ENCODE measurements at regions of chr22 and their contacts with region 1.

Region 1: GRCh38 chr22:29766632-29767170 is at the start of gene ZMAT5:
- DNase-seq: peak; percentile 97
- H3K4me3 Mint-ChIP-seq: peak within 1 kb of the TSS; percentile 96
- H3K27ac Mint-ChIP-seq: peak within 1 kb of the TSS; percentile 91
- H3K4me1 Mint-ChIP-seq: peaks cover 33% of the 10 kb centered on the region
- H3K27me3 Mint-ChIP-seq: no peaks in the 10 kb centered on the region
- total RNA-seq, gene ZMAT5: 14.3 to 15.3 TPM

Region 2: GRCh38 chr22:29727131-29727523 is 39.6 kb before region 1 on chr22:
- CTCF ChIA-PET with region 1: no interaction called
- intact Hi-C with region 1: no loop called
- DNase-seq: peak; percentile 39
- H3K4me3 Mint-ChIP-seq: no peak overlapping the region
- H3K27ac Mint-ChIP-seq: no peak overlapping the region
- H3K4me1 Mint-ChIP-seq: no peaks in the 10 kb centered on the region
- H3K27me3 Mint-ChIP-seq: no peaks in the 10 kb centered on the region

Region 3: GRCh38 chr22:29737251-29738117 is 29.2 kb before region 1 on chr22:
- CTCF ChIA-PET with region 1: no interaction called
- intact Hi-C with region 1: no loop called
- DNase-seq: no peak
- H3K4me3 Mint-ChIP-seq: no peak overlapping the region
- H3K27ac Mint-ChIP-seq: no peak overlapping the region
- H3K4me1 Mint-ChIP-seq: no peaks in the 10 kb centered on the region
- H3K27me3 Mint-ChIP-seq: no peaks in the 10 kb centered on the region

Region 4: GRCh38 chr22:29820961-29821789 is 54.5 kb after region 1 on chr22:
- CTCF ChIA-PET with region 1: no interaction called
- intact Hi-C with region 1: loop called (anchors 1 kb)
- DNase-seq: peak; percentile 86
- H3K4me3 Mint-ChIP-seq: no peak overlapping the region
- H3K27ac Mint-ChIP-seq: peak overlapping the region; percentile 83
- H3K4me1 Mint-ChIP-seq: peaks cover 15% of the 10 kb centered on the region
- H3K27me3 Mint-ChIP-seq: no peaks in the 10 kb centered on the region

Region 5: GRCh38 chr22:29837780-29838598 is 71.3 kb after region 1 on chr22 and contains the start of gene ASCC2:
- CTCF ChIA-PET with region 1: no interaction called
- intact Hi-C with region 1: loop called (anchors 1 kb)
- DNase-seq: peak; percentile 100
- H3K4me3 Mint-ChIP-seq: peak within 1 kb of the TSS; percentile 94
- H3K27ac Mint-ChIP-seq: peak within 1 kb of the TSS; percentile 92
- H3K4me1 Mint-ChIP-seq: peaks cover 34% of the 10 kb centered on the region
- H3K27me3 Mint-ChIP-seq: no peaks in the 10 kb centered on the region
- total RNA-seq, gene ASCC2: 57.6 to 60.4 TPM

Region 6: DNA sequence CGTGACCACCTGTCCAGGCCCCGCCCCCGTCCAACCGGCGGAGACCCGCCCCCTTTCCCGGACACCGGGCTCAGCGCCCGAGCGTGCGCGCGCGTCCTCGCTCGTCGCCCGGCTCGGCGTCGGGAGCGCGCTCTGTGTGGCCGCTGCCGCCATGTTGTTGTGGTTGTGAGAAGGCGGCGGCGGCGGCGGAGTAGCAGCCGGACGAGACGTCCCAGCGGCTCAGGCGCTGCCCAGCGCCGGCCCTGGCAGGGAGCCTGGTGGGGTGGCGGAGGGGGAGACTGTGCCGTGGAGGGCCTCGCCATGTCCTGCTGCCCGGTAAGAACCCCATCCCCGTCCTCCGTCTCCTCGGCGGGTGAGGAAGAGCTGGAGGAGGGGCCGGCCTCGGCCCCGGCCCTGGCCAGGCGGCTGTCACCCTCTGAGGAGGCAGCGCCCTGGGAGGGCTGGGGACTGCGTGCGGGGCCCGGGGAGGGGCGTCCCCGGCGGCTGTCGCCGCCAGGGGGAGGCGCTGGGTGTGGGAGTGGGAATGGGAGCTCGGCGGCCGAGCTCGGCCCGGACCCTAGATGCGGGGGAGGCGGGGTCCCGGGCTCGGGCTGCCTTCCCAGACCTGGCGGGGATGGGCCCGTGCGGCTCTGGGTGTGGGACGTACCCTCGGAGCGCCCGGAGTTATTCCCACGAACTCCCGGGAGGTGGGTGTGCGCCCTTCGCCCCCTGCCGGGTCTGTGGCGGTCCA is 116.5 kb after region 1 on chr22 and contains the start of gene MTMR3:
- CTCF ChIA-PET with region 1: no interaction called
- intact Hi-C with region 1: loop called (anchors 1 kb)
- DNase-seq: peak; percentile 95
- H3K4me3 Mint-ChIP-seq: peak within 1 kb of the TSS; percentile 89
- H3K27ac Mint-ChIP-seq: peak within 1 kb of the TSS; percentile 78
- H3K4me1 Mint-ChIP-seq: peaks cover 6% of the 10 kb centered on the region
- H3K27me3 Mint-ChIP-seq: no peaks in the 10 kb centered on the region
- total RNA-seq, gene MTMR3: 26.0 to 27.1 TPM

Region 7: DNA sequence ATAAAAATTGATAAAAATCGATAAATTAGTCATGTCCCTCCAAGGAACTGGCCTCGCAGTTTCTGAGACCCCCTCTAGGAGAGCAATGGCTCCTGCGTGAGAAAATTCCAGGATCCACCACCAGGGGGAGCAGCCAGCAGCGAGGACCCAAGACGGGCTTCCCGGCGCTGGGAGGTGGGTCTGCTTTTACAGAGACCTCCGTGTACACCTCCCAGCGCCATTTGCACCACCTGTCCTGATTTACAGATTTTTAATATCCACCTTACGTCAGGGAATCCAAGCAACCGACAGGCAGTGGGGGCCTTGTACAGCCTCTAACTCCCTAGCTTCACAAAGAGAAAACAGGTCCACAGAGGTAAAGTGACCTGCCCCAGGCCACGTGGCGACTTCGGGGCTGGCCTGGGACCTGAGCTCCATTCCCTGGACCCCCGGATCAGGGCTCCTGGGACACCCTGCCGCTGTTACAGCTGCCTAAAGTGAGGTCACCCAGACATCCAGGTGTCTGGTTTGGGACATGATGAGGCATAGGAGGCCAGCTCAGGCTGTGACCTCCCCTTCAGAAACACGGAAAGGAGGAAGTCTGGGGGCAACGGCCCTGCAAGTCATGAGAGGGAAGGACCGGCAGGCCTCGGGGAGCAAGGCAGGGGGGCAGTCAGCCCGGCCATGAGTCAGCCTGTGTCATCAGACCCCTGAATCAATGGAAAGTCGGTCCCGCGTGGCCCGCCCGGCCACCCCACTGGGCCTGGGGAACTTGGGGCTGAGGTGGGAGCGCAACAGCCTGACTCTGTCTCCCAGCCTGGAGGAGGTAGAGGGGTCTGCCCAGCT is 496.4 kb after region 1 on chr22:
- CTCF ChIA-PET with region 1: no interaction called
- intact Hi-C with region 1: loop called (anchors 5 kb)
- DNase-seq: peak; percentile 87
- H3K4me3 Mint-ChIP-seq: peak overlapping the region; percentile 65
- H3K27ac Mint-ChIP-seq: peak overlapping the region; percentile 43
- H3K4me1 Mint-ChIP-seq: peaks cover 39% of the 10 kb centered on the region
- H3K27me3 Mint-ChIP-seq: no peaks in the 10 kb centered on the region

Measured in activated naive CD4-positive, alpha-beta T cell treated with anti-CD3 and anti-CD28 coated beads for 36 hours (primary cell).